ENCODE measurements at regions of chr9 and their contacts with region 1.

Region 1: DNA sequence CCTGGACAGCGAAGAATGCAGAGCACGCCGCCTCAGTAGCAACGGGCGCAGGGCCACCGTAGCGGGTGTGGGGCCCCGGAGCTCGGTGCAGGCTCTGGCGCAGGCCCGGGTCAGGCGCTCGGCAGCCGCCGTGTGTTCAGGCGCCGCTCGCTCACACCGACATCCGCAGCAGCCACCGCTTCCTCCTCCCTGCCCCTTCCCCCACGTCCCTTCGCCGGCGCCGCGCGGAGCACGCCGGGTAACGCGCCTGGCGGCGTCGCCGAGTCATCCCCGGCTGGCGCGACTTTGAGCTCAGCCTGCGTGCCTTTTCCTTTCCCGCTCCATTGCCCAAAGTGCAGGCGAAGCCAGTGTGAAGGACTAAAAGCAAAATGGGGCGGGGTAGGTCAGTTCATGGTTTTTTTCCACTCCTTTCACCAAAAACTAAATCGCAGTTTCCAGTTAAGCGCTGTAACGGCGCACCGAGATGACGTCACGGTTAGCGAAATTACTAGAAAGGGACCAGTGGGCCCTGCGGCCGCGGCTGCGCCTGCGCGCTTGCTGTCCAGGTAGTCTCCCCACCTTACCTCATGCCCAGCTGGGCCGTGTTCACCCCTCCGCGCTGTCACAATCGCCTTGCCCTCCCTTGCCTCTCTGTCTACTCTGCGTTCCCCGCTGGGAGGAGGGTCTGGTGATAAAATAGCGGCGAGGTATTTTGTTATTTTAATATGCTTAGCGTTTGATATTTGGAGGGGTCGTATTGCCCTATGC is at the start of gene UBQLN1:
- DNase-seq: peak; percentile 96 to 97
- ATAC-seq: peak; percentile 98
- H3K4me3 ChIP-seq: peak within 1 kb of the TSS; percentile 88 to 91
- H3K27ac ChIP-seq: peak within 1 kb of the TSS; percentile 76 to 96
- H3K4me1 ChIP-seq: peaks cover 2 to 4% of the 10 kb centered on the region in 2 donors
- H3K27me3 ChIP-seq: no peaks in the 10 kb centered on the region
- total RNA-seq, gene UBQLN1: 80.0 to 93.1 TPM

Region 2: DNA sequence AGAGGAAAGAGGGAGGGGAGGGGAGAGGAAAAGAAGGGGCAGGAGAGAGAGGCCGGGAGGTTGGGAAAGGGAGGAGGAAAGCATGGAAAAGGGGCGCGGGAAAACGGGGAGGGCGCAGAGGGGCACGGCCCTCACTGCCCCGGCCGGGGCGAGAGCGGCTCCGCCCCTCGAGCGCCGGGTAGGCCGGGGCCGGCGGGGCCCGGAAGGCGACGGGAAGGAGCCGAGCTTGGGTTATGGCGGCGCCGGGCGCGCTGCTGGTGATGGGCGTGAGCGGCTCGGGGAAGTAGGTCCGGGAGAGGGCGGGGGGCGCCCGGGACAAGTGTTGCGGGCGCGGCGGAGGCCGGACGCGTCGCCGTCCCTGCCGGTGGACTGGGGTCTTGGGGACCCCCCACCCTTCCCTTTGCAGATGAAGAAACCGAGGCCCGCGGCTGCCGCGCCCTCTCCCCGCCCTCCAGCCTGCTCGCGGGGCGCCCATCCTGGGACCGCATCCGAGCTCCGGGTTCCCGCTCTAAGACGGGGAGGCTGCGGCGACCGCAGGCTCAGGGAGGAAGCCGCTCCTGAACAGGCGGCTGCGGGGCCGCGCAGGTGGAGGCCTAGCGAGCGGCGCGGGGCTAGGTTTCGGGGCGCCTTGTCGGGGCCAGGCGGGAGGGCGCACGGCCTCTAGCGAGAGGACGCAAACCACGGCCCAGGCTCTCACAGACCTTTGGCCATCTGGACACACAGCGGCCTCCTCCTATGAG is 84.8 kb before region 1 on chr9 and contains the start of gene IDNK:
- intact Hi-C with region 1: loop called (anchors 5 kb)
- DNase-seq: peak; percentile 71 to 91
- ATAC-seq: peak; percentile 91
- H3K4me3 ChIP-seq: peak within 1 kb of the TSS; percentile 50 to 91
- H3K27ac ChIP-seq: peak within 1 kb of the TSS; percentile 36 to 89
- H3K4me1 ChIP-seq: peaks cover 0 to 1% of the 10 kb centered on the region in 2 donors
- H3K27me3 ChIP-seq: no peaks in the 10 kb centered on the region
- total RNA-seq, gene IDNK: 1.7 to 6.3 TPM

Region 3: GRCh38 chr9:83656032-83656680 is 51.8 kb before region 1 on chr9:
- intact Hi-C with region 1: no loop called
- DNase-seq: no peak
- ATAC-seq: no peak
- H3K4me3 ChIP-seq: no peak overlapping the region
- H3K27ac ChIP-seq: no peak overlapping the region
- H3K4me1 ChIP-seq: no peaks in the 10 kb centered on the region
- H3K27me3 ChIP-seq: no peaks in the 10 kb centered on the region

Region 4: GRCh38 chr9:83920927-83921707 is 213.2 kb after region 1 on chr9 and contains the start of gene KIF27:
- intact Hi-C with region 1: loop called in 1 of 2 experiments (anchors 5 kb)
- DNase-seq: peak; percentile 100
- ATAC-seq: peak; percentile 99
- H3K4me3 ChIP-seq: peak within 1 kb of the TSS; percentile 85 to 87
- H3K27ac ChIP-seq: peak within 1 kb of the TSS; percentile 43 to 70
- H3K4me1 ChIP-seq: no peaks in the 10 kb centered on the region
- H3K27me3 ChIP-seq: no peaks in the 10 kb centered on the region
- total RNA-seq, gene KIF27: 6.8 to 8.0 TPM